BJ (cell line): ENCODE measurements at regions of chr6 and their contacts with region 1.

Region 1: GRCh38 chr6:13908955-13909381 is 15.8 kb upstream of the RNF182 start:
- DNase-seq: no peak
- H3K4me3 ChIP-seq: no peak overlapping the region
- H3K27me3 ChIP-seq: peaks cover 1% of the 10 kb centered on the region; the same call in 1 of the 2 replicates
- CTCF ChIP-seq: peak; percentile 74

Region 2: GRCh38 chr6:13759025-13759424 is 149.9 kb before region 1 on chr6:
- CTCF ChIA-PET with region 1: no interaction called
- POLR2A ChIA-PET with region 1: no interaction called
- DNase-seq: no peak
- H3K4me3 ChIP-seq: no peak overlapping the region
- H3K27me3 ChIP-seq: no peaks in the 10 kb centered on the region; the same call in 1 of the 2 replicates
- CTCF ChIP-seq: no peak

Region 3: DNA sequence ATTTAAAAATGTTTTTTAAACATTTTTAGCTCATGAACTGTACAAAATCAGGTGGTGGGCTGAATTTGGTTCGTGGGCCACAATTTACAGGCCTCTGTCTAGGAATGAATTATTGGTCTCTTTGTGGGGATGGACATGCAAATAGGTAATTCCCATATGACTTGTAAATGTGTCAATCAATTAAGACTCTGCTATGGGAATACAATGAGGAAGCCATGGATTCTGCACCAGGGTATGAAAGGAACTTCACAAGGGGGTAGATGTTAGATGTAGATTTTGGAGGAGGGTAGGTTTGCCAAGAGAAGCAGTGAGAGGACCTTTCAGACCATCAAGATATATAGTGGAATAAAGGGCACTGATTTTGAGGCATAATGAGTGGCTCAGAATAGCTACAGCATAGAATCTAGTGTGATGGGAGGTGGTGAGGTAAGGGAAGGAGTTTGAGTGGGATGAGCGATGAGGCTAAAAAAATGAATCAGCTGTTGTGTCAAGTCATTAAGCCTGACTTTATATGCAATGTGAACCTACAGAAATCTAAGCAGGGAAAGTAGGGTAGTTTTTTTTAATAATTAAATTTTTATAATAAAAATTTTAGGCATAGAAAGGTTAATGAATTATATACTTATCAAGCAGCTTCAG is 16.8 kb before region 1 on chr6:
- CTCF ChIA-PET with region 1: interaction called, 10 read pairs
- POLR2A ChIA-PET with region 1: no interaction called
- DNase-seq: no peak
- H3K4me3 ChIP-seq: no peak overlapping the region
- H3K27me3 ChIP-seq: peaks cover 2% of the 10 kb centered on the region; the same call in 1 of the 2 replicates
- CTCF ChIP-seq: no peak

Region 4: GRCh38 chr6:14046476-14047068 is 137.6 kb after region 1 on chr6:
- CTCF ChIA-PET with region 1: interaction called, 129 read pairs
- POLR2A ChIA-PET with region 1: no interaction called
- DNase-seq: no peak
- H3K4me3 ChIP-seq: no peak overlapping the region
- H3K27me3 ChIP-seq: peaks cover 6% of the 10 kb centered on the region
- CTCF ChIP-seq: peak; percentile 79

Region 5: GRCh38 chr6:14144678-14145113 is 235.7 kb after region 1 on chr6:
- CTCF ChIA-PET with region 1: interaction called, 13 read pairs
- POLR2A ChIA-PET with region 1: no interaction called
- DNase-seq: no peak
- H3K4me3 ChIP-seq: no peak overlapping the region
- H3K27me3 ChIP-seq: no peaks in the 10 kb centered on the region
- CTCF ChIP-seq: peak; percentile 94